ENCODE measurements at regions of chr6 and their contacts with region 1.

Region 1: GRCh38 chr6:169019727-169020491 is 233.7 kb downstream of the THBS2 start:
- DNase-seq: peak in 1 of 2 experiments; percentile 7
- H3K4me3 ChIP-seq: no peak overlapping the region
- H3K27ac ChIP-seq: no peak overlapping the region
- H3K4me1 ChIP-seq: no peaks in the 10 kb centered on the region
- H3K27me3 ChIP-seq: no peaks in the 10 kb centered on the region
- CTCF ChIP-seq: peak; percentile 47 to 66 (median 55)
- EP300 ChIP-seq: no peak
- POLR2A ChIP-seq: no peak
- RAD21 ChIP-seq: peak; percentile 66 to 76

Region 2: GRCh38 chr6:169310983-169311382 is 291.1 kb after region 1 on chr6:
- CTCF ChIA-PET with region 1: no interaction called
- POLR2A ChIA-PET with region 1: no interaction called
- DNase-seq: no peak
- H3K4me3 ChIP-seq: no peak overlapping the region
- H3K27ac ChIP-seq: no peak overlapping the region
- H3K4me1 ChIP-seq: no peaks in the 10 kb centered on the region
- H3K27me3 ChIP-seq: no peaks in the 10 kb centered on the region
- CTCF ChIP-seq: no peak
- EP300 ChIP-seq: no peak
- POLR2A ChIP-seq: no peak
- RAD21 ChIP-seq: no peak

Region 3: GRCh38 chr6:169326067-169326799 is 306.3 kb after region 1 on chr6:
- CTCF ChIA-PET with region 1: interaction called, 14 read pairs
- POLR2A ChIA-PET with region 1: no interaction called
- DNase-seq: peak; percentile 23 to 72
- H3K4me3 ChIP-seq: no peak overlapping the region
- H3K27ac ChIP-seq: no peak overlapping the region
- H3K4me1 ChIP-seq: no peaks in the 10 kb centered on the region; a peak in 1 of 7 replicates
- H3K27me3 ChIP-seq: no peaks in the 10 kb centered on the region
- CTCF ChIP-seq: peak; percentile 74 to 81 (median 79)
- EP300 ChIP-seq: no peak
- POLR2A ChIP-seq: no peak
- RAD21 ChIP-seq: peak; percentile 89 to 91